Panc1 (cell line): ENCODE measurements at regions of chr7 and their contacts with region 1.

Region 1: GRCh38 chr7:102279537-102280400 is 6.9 kb upstream of the SH2B2 start:
- DNase-seq: peak; percentile 24
- ATAC-seq: peak; percentile 91
- H3K4me3 ChIP-seq: no peak overlapping the region
- H3K27ac ChIP-seq: no peak overlapping the region
- H3K4me1 ChIP-seq: no peaks in the 10 kb centered on the region; the same call in 1 of the 2 replicates
- H3K27me3 ChIP-seq: no peaks in the 10 kb centered on the region
- CTCF ChIP-seq: peak; percentile 96

Region 2: GRCh38 chr7:102390697-102391484 is 111.1 kb after region 1 on chr7:
- CTCF ChIA-PET with region 1: interaction called, 9 read pairs
- POLR2A ChIA-PET with region 1: no interaction called
- in situ Hi-C with region 1: no loop called
- intact Hi-C with region 1: loop called (anchors 1 kb)
- DNase-seq: peak; percentile 60
- ATAC-seq: peak; percentile 97
- H3K4me3 ChIP-seq: no peak overlapping the region
- H3K27ac ChIP-seq: no peak overlapping the region
- H3K4me1 ChIP-seq: no peaks in the 10 kb centered on the region
- H3K27me3 ChIP-seq: no peaks in the 10 kb centered on the region
- CTCF ChIP-seq: peak; percentile 96

Region 3: DNA sequence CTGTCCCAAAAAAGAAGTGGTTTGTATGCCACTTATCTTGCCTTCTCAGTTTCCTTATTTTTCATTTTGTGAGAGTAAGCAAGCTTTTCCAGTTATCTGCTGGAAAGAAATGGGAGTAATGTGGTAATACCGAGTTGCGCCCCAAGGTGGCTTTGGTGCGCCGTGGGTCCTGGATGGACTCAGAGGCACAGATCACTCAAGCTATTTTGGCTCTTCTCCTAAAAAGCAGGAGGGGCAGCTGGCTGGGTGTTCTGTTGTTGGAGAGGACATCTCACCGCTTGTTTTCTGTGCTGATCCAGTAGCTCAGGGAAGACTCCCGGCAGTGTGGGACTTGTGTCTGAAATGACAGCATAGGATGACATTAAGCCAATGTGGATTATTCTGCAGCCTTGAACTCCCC is 132.8 kb after region 1 on chr7:
- CTCF ChIA-PET with region 1: no interaction called
- POLR2A ChIA-PET with region 1: no interaction called
- in situ Hi-C with region 1: loop called (anchors 10 kb)
- intact Hi-C with region 1: no loop called
- DNase-seq: no peak
- ATAC-seq: peak; percentile 76
- H3K4me3 ChIP-seq: no peak overlapping the region
- H3K27ac ChIP-seq: no peak overlapping the region
- H3K4me1 ChIP-seq: no peaks in the 10 kb centered on the region
- H3K27me3 ChIP-seq: no peaks in the 10 kb centered on the region
- CTCF ChIP-seq: no peak; the same call in 1 of the 2 replicates